ENCODE measurements at regions of chr1 and their contacts with region 1.

Region 1: GRCh38 chr1:179229214-179230140 is at the start of gene ABL2:
- DNase-seq: peak; percentile 60
- H3K4me3 Mint-ChIP-seq: peak within 1 kb of the TSS; percentile 90
- H3K27ac Mint-ChIP-seq: peak within 1 kb of the TSS; percentile 80
- H3K4me1 Mint-ChIP-seq: peaks cover 34% of the 10 kb centered on the region
- H3K27me3 Mint-ChIP-seq: no peaks in the 10 kb centered on the region
- total RNA-seq, gene ABL2: 8.8 to 9.1 TPM

Region 2: DNA sequence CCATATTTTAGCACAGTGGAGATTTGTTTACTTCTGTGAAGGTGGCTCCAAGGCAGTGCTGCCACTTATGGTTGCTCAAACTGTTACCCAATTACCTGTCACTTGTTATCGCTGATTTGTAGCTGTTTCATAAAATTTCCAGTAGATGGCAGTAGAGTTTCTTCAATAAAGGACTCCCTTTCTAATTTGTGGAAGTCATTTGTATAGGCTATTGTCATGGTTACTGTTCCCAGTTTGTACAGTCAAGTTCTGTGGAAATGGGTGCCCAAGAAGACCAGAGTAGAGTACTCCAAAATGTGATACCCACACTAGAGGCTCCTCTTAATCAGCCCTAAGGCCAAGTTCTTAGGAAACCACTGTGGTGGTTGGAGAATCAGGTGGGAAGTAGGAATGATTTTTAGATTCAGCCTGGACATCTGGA is 918.8 kb before region 1 on chr1:
- CTCF ChIA-PET with region 1: no interaction called
- POLR2A ChIA-PET with region 1: no interaction called
- intact Hi-C with region 1: no loop called
- DNase-seq: no peak
- H3K4me3 Mint-ChIP-seq: no peak overlapping the region
- H3K27ac Mint-ChIP-seq: no peak overlapping the region
- H3K4me1 Mint-ChIP-seq: no peaks in the 10 kb centered on the region
- H3K27me3 Mint-ChIP-seq: peaks cover 1% of the 10 kb centered on the region

Region 3: DNA sequence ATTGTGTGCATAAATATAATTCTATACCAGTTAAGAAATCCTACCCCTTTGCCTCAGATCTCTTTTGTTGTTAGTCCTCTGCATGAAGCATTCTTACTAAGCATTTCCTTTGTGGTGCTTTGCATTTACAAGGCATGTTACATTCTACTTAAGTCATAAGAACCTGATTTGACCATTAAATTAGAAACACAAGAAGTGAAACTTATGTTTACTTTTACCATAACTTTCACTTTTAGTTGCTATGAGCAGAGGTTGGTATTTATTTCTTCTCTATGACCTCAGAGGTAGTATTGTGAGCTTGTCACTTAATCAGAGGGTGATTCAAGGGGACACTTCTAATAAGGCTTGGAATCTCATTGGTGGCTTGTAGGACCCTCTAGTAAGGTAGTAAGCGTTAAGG is 194.8 kb before region 1 on chr1:
- CTCF ChIA-PET with region 1: no interaction called
- POLR2A ChIA-PET with region 1: interaction called, 6 read pairs
- intact Hi-C with region 1: loop called (anchors 2 kb)
- DNase-seq: no peak
- H3K4me3 Mint-ChIP-seq: no peak overlapping the region
- H3K27ac Mint-ChIP-seq: peak overlapping the region; percentile 68
- H3K4me1 Mint-ChIP-seq: peaks cover 85% of the 10 kb centered on the region
- H3K27me3 Mint-ChIP-seq: no peaks in the 10 kb centered on the region

Region 4: GRCh38 chr1:179121159-179121938 is 108.1 kb before region 1 on chr1:
- CTCF ChIA-PET with region 1: interaction called, 4 read pairs
- POLR2A ChIA-PET with region 1: no interaction called
- intact Hi-C with region 1: loop called (anchors 1 kb)
- DNase-seq: peak; percentile 49
- H3K4me3 Mint-ChIP-seq: no peak overlapping the region
- H3K27ac Mint-ChIP-seq: no peak overlapping the region
- H3K4me1 Mint-ChIP-seq: peaks cover 7% of the 10 kb centered on the region
- H3K27me3 Mint-ChIP-seq: no peaks in the 10 kb centered on the region

Region 5: GRCh38 chr1:179129702-179130473 is 99.6 kb before region 1 on chr1:
- CTCF ChIA-PET with region 1: no interaction called
- POLR2A ChIA-PET with region 1: interaction called, 3 read pairs
- intact Hi-C with region 1: loop called (anchors 1 kb)
- DNase-seq: peak; percentile 27
- H3K4me3 Mint-ChIP-seq: peak overlapping the region; percentile 59
- H3K27ac Mint-ChIP-seq: peak overlapping the region; percentile 82
- H3K4me1 Mint-ChIP-seq: peaks cover 24% of the 10 kb centered on the region
- H3K27me3 Mint-ChIP-seq: no peaks in the 10 kb centered on the region

Region 6: GRCh38 chr1:179142889-179143299 is 86.6 kb before region 1 on chr1:
- CTCF ChIA-PET with region 1: no interaction called
- POLR2A ChIA-PET with region 1: no interaction called
- intact Hi-C with region 1: loop called (anchors 1 kb)
- DNase-seq: no peak
- H3K4me3 Mint-ChIP-seq: no peak overlapping the region
- H3K27ac Mint-ChIP-seq: no peak overlapping the region
- H3K4me1 Mint-ChIP-seq: peaks cover 26% of the 10 kb centered on the region
- H3K27me3 Mint-ChIP-seq: no peaks in the 10 kb centered on the region

Region 7: DNA sequence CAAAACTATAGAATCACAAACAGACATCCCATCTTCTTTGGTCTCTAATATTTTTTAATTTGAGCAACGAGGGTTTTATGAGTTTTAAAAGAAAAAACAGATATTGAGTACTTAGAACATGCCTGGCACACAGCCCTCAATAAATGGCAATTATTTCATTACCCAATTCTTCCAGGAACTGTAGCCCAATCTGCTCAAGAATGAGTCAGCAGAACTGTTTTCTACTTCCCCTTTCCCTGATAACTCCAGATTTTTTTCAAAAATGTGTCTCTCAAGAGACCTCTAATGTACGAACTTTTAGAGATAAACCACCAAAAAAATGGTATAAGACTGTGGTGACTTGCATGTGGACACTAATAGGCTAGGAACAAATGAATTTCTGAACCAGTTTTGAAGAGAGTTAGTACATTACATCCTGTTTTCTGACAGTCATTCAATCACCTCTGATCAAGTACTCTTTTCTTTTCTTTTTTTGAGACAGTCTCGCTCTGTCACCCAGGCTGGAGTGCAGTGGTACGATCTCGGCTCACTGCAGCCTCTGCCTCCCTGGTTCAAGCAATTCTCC is 11.5 kb before region 1 on chr1:
- CTCF ChIA-PET with region 1: no interaction called
- POLR2A ChIA-PET with region 1: no interaction called
- intact Hi-C with region 1: loop called (anchors 2 kb)
- DNase-seq: no peak
- H3K4me3 Mint-ChIP-seq: no peak overlapping the region
- H3K27ac Mint-ChIP-seq: no peak overlapping the region
- H3K4me1 Mint-ChIP-seq: peaks cover 15% of the 10 kb centered on the region
- H3K27me3 Mint-ChIP-seq: no peaks in the 10 kb centered on the region

Region 8: DNA sequence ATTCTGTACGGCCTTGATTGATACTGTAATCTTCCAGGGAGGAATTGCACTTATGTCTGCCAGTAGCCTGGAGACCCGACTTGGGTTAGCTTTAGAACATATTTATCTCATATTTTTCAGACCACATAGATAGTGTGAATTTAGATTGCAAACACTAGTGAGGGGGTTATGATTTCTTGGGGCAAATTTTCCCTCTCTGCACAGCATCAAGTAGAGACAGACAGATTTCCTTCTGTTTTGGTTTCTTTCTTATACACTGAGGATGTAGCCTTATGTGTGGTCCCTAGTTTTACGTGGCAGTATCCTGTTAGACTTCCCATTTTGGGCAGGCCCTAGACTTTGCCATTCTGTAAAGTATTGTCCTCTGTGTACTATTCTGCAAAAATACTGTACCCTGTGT is 93.1 kb after region 1 on chr1:
- CTCF ChIA-PET with region 1: no interaction called
- POLR2A ChIA-PET with region 1: no interaction called
- intact Hi-C with region 1: loop called (anchors 1 kb)
- DNase-seq: no peak
- H3K4me3 Mint-ChIP-seq: no peak overlapping the region
- H3K27ac Mint-ChIP-seq: no peak overlapping the region
- H3K4me1 Mint-ChIP-seq: peaks cover 33% of the 10 kb centered on the region
- H3K27me3 Mint-ChIP-seq: no peaks in the 10 kb centered on the region